Activated T-helper 1 cell treated with anti-CD3 and anti-CD28 coated beads, Interleukin-12 subunit alpha, Interleukin-12 subunit beta, Interleukin-2, Interleukin-4 antibody, amounts not matched to agents 30 ng/mL and 10 ng/mL and 1 ng/mL, durations not matched to agents 14 hours and 24 hours and 36 hours (primary cell): ENCODE measurements at regions of chr21 and their contacts with region 1.

Region 1: GRCh38 chr21:36700971-36701755 is 2.2 kb downstream of the SIM2 start:
- DNase-seq: no peak
- H3K4me3 Mint-ChIP-seq: no peak overlapping the region
- H3K27ac Mint-ChIP-seq: peak overlapping the region; percentile 44
- H3K4me1 Mint-ChIP-seq: no peaks in the 10 kb centered on the region
- H3K27me3 Mint-ChIP-seq: peaks cover 60% of the 10 kb centered on the region

Region 2: GRCh38 chr21:36615274-36615964 is 85.7 kb before region 1 on chr21:
- intact Hi-C with region 1: no loop called
- DNase-seq: no peak
- H3K4me3 Mint-ChIP-seq: no peak overlapping the region
- H3K27ac Mint-ChIP-seq: no peak overlapping the region
- H3K4me1 Mint-ChIP-seq: no peaks in the 10 kb centered on the region
- H3K27me3 Mint-ChIP-seq: peaks cover 2% of the 10 kb centered on the region

Region 3: GRCh38 chr21:36747815-36748383 is 46.7 kb after region 1 on chr21:
- intact Hi-C with region 1: loop called (anchors 5 kb)
- DNase-seq: no peak
- H3K4me3 Mint-ChIP-seq: no peak overlapping the region
- H3K27ac Mint-ChIP-seq: no peak overlapping the region
- H3K4me1 Mint-ChIP-seq: peaks cover 11% of the 10 kb centered on the region
- H3K27me3 Mint-ChIP-seq: peaks cover 41% of the 10 kb centered on the region